Heart left ventricle (tissue), 16 donors: ENCODE measurements at regions of chrX and their contacts with region 1.

Region 1: GRCh38 chrX:41180194-41180908 is 95.1 kb downstream of the USP9X start:
- DNase-seq: peak in 3 of 5 donors; percentile 8 to 47 (median 34)
- ATAC-seq: peak in 1 of 4 donors; percentile 65
- H3K4me3 ChIP-seq: no peak overlapping the region
- H3K27ac ChIP-seq: peak overlapping the region in 1 of 12 donors; percentile 27
- H3K4me1 ChIP-seq: peaks cover 0 to 21% (median 2%) of the 10 kb centered on the region in 12 donors
- H3K27me3 ChIP-seq: no peaks in the 10 kb centered on the region
- CTCF ChIP-seq: peak in 11 of 12 donors; percentile 35 to 85 (median 64)
- POLR2A ChIP-seq: no peak

Region 2: DNA sequence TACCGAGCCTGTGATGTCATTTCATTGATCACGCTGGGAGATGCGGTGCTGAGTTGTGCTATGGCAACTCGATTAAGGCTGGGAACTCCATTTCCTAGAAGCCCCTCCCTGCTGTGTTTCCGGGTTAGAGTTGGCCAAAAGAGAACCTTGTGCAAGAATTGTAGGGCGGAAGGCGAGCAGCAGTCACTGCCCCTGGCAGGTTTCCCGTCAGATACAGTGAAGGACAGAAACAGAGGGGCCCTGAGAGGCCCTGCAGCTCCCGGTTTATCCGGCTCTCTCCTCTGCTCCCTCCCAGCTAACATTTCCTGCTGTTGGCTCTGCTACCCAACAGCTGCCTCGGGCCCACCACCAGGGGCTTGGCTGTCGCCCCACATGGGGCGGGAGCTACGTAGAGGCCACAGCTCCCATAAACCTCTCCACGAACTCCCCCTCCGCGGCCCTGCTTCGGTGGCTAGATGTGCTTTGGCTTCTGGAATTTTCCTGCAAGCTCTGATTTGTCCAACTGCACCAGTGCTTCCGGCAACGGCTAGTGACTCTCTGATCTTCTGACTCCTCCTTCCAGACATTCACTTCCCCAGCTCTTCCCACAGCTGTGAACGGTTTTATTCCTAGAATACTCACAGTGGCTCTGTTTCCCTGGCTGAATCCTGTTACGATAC is 170.0 kb before region 1 on chrX:
- intact Hi-C with region 1: no loop called
- DNase-seq: peak; percentile 79 to 87 (median 86)
- ATAC-seq: peak; percentile 89 to 97 (median 96)
- H3K4me3 ChIP-seq: peak overlapping the region in 10 of 12 donors; percentile 20 to 52 (median 44)
- H3K27ac ChIP-seq: peak overlapping the region; percentile 63 to 94 (median 86)
- H3K4me1 ChIP-seq: peaks cover 0 to 21% (median 7%) of the 10 kb centered on the region in 12 donors
- H3K27me3 ChIP-seq: peaks cover 0 to 29% (median 0%) of the 10 kb centered on the region in 9 donors
- CTCF ChIP-seq: peak in 7 of 12 donors; percentile 14 to 39 (median 25)
- POLR2A ChIP-seq: no peak

Region 3: DNA sequence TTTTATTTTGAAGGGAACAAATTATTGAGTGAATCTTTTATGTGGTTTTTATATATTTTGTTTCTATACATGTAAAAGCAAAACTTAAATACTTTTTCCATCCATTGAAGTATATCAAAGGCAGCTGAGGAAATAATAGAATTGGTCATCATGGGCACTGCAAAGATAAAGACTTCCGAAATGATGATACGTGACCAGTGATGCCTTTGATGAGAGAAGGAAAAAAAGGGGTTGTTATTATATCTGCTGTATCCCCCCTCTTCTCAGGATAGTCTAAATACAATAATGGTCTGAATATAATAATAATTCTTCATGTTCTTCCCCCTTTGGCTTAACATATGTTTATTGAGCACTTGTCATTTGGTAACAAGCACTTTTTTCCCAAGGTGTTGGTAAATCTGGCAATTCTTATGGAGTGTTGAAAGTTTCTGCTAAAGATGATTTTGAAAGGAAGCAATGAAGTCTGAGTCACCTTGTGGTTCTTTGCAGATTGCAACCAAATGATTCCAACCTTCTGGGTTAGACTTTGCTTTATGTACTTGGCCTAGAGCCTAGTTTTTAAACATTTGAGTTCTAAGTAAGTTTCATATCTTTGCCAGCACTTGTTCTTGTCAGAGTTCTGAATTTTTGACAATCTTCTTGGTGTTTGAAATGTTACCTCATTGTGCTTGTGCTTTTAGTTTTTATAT is 34.3 kb before region 1 on chrX:
- intact Hi-C with region 1: no loop called
- DNase-seq: no peak
- ATAC-seq: no peak
- H3K4me3 ChIP-seq: no peak overlapping the region
- H3K27ac ChIP-seq: no peak overlapping the region
- H3K4me1 ChIP-seq: no peaks in the 10 kb centered on the region
- H3K27me3 ChIP-seq: no peaks in the 10 kb centered on the region
- CTCF ChIP-seq: no peak
- POLR2A ChIP-seq: no peak

Region 4: GRCh38 chrX:41449615-41450014 is 269.3 kb after region 1 on chrX:
- intact Hi-C with region 1: loop called in 1 of 10 experiments (anchors 10 kb)
- DNase-seq: peak in 1 of 5 donors; percentile 25
- ATAC-seq: peak; percentile 78 to 88 (median 84)
- H3K4me3 ChIP-seq: peak overlapping the region in 6 of 12 donors; percentile 0 to 37 (median 16)
- H3K27ac ChIP-seq: peak overlapping the region; percentile 38 to 76 (median 62)
- H3K4me1 ChIP-seq: peaks cover 0 to 14% (median 4%) of the 10 kb centered on the region in 12 donors
- H3K27me3 ChIP-seq: peaks cover 0 to 5% (median 0%) of the 10 kb centered on the region in 9 donors
- CTCF ChIP-seq: no peak
- POLR2A ChIP-seq: no peak